Transverse colon (tissue), 4 donors: ENCODE measurements at regions of chr2 and their contacts with region 1.

Region 1: GRCh38 chr2:211149731-211150130 is 593.3 kb downstream of the CPS1 start:
- DNase-seq: no peak
- H3K4me3 ChIP-seq: no peak overlapping the region
- H3K27ac ChIP-seq: no peak overlapping the region
- H3K4me1 ChIP-seq: no peaks in the 10 kb centered on the region
- H3K27me3 ChIP-seq: no peaks in the 10 kb centered on the region
- CTCF ChIP-seq: no peak
- EP300 ChIP-seq: no peak
- POLR2A ChIP-seq: no peak

Region 2: GRCh38 chr2:212042562-212042961 is 892.8 kb after region 1 on chr2:
- in situ Hi-C with region 1: no loop called
- intact Hi-C with region 1: no loop called
- DNase-seq: no peak
- H3K4me3 ChIP-seq: no peak overlapping the region
- H3K27ac ChIP-seq: no peak overlapping the region
- H3K4me1 ChIP-seq: no peaks in the 10 kb centered on the region
- H3K27me3 ChIP-seq: no peaks in the 10 kb centered on the region
- CTCF ChIP-seq: no peak
- EP300 ChIP-seq: no peak
- POLR2A ChIP-seq: no peak

Region 3: DNA sequence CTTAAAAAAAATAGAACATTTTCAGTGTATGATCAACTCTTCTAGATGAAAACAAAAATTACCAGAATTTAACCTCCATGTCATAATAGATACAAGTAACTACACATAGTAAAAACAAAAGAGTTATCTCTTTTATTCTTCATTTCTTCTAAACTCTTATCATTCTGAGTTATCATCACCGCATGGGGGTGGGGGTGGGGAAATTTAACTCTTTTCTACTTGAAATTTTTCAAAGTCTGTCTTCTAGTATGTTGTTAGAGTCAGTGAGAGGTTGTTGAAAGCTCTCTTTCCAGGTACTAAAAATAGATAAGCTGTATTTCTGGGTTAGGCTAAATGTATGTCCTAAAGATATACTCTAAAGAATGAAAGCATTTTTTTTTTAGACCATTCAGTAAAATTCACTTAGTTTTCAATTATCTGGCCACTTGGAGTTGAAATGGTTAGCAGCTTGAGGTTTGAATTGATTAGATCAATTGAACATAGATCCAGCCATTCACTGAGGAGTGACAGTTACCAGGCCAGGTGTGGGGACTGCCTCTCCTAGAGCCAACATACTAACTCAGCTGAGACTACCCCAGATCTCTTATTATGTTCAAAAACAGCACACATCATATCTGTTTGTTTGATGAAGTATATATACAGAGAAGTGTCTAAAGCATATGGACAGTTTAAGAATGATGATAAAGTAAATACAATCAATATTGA is 1781.0 kb after region 1 on chr2:
- in situ Hi-C with region 1: no loop called
- intact Hi-C with region 1: loop called (anchors 5 kb)
- DNase-seq: no peak
- H3K4me3 ChIP-seq: no peak overlapping the region
- H3K27ac ChIP-seq: no peak overlapping the region
- H3K4me1 ChIP-seq: no peaks in the 10 kb centered on the region
- H3K27me3 ChIP-seq: no peaks in the 10 kb centered on the region
- CTCF ChIP-seq: no peak
- EP300 ChIP-seq: no peak
- POLR2A ChIP-seq: no peak